ENCODE measurements at regions of chr13 and their contacts with region 1.

Region 1: GRCh38 chr13:20127577-20128466 is 33.0 kb downstream of the GJA3 start:
- DNase-seq: peak; percentile 87
- H3K4me3 ChIP-seq: peak overlapping the region; percentile 40 to 48
- H3K27ac ChIP-seq: no peak overlapping the region; a peak in 1 of 4 replicates
- H3K4me1 ChIP-seq: peaks cover 0 to 4% of the 10 kb centered on the region in 2 experiments; a peak in 2 of 4 replicates
- H3K27me3 ChIP-seq: peaks cover 40% of the 10 kb centered on the region
- CTCF ChIP-seq: peak; percentile 44
- EP300 ChIP-seq: no peak
- RAD21 ChIP-seq: no peak

Region 2: DNA sequence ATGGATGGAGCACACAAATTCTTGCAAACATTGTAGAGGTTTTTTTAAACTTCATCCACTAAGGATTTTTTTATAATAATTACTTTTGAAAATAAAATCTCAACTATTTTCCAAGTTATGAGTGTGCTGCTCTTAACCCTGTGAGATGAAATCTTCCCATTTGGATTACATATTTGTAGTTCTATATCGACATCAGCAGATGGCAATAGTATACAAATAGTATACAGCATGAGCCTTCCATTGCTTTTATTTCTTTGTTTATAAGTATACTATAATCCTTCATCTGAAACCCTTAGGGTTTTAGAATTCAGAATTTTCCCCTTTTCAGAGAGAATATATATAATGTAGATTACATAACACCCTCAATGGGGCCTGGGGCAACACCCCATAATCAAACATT is 37.5 kb before region 1 on chr13:
- CTCF ChIA-PET with region 1: interaction called, 12 read pairs
- POLR2A ChIA-PET with region 1: no interaction called
- DNase-seq: no peak
- H3K4me3 ChIP-seq: no peak overlapping the region
- H3K27ac ChIP-seq: no peak overlapping the region
- H3K4me1 ChIP-seq: no peaks in the 10 kb centered on the region
- H3K27me3 ChIP-seq: no peaks in the 10 kb centered on the region
- CTCF ChIP-seq: peak; percentile 33; the same call in 1 of the 2 replicates
- EP300 ChIP-seq: no peak
- RAD21 ChIP-seq: 0 out of 2 replicates have a peak, but pooled peaks have one; percentile 26

Region 3: DNA sequence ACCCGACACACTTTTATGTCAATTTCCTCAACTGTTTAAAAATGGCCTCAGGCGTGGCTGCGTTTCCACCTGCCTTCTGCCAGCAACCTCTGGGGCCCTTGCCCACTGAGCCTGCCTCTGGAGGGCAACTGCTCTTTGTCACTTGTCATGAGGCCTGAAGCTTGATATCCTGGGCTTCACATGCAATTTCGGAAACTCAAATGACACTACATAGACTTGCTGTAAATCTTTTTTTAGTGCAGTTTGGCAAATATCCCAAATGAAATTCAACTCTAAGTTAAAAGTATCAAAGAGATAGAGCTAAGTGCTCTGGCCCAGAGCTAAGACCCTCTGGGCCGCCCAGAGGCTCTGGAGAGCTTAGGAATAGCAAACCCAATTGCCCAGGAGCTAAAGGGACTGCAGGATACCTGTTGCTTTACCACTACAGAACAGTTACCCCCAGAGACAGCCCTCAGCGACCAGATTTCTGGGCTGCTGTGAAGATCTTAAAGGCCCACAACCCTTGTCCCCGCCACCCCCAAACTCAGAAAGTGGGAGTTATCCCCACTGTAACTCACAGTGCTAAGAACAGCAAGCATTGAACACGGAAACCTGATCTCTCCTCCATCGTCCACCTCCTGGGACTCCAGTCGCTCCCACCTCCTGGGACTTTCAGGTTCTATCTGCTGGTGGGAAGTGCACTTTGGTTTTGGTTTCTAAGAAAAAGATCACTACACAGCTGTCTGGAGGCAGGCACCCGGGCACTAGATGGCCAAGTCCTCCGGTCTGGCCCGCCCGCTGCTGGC is 13.6 kb after region 1 on chr13:
- CTCF ChIA-PET with region 1: interaction called, 14 read pairs
- POLR2A ChIA-PET with region 1: interaction called, 3 read pairs
- DNase-seq: no peak
- H3K4me3 ChIP-seq: no peak overlapping the region; a peak in 1 of 4 replicates
- H3K27ac ChIP-seq: no peak overlapping the region
- H3K4me1 ChIP-seq: peaks cover 0 to 6% of the 10 kb centered on the region in 2 experiments; a peak in 1 of 4 replicates
- H3K27me3 ChIP-seq: peaks cover 86% of the 10 kb centered on the region
- CTCF ChIP-seq: no peak
- EP300 ChIP-seq: no peak
- RAD21 ChIP-seq: no peak

Measured in SK-N-SH (cell line).